Activated CD4-positive, alpha-beta T cell treated with anti-CD3 and anti-CD28 coated beads for 36 hours (primary cell): ENCODE measurements at regions of chr1 and their contacts with region 1.

Region 1: GRCh38 chr1:222654849-222655248 is 37.0 kb downstream of the MIA3 start:
- DNase-seq: peak; percentile 80
- ATAC-seq: peak; percentile 89
- H3K4me3 Mint-ChIP-seq: peak overlapping the region; percentile 20
- H3K27ac Mint-ChIP-seq: peak overlapping the region; percentile 86
- H3K4me1 Mint-ChIP-seq: peaks cover 54% of the 10 kb centered on the region
- H3K27me3 Mint-ChIP-seq: no peaks in the 10 kb centered on the region

Region 2: GRCh38 chr1:222617367-222617951 is 37.4 kb before region 1 on chr1:
- CTCF ChIA-PET with region 1: no interaction called
- POLR2A ChIA-PET with region 1: no interaction called
- intact Hi-C with region 1: loop called in 1 of 2 experiments (anchors 1 kb)
- DNase-seq: peak; percentile 94
- ATAC-seq: peak; percentile 95
- H3K4me3 Mint-ChIP-seq: peak overlapping the region; percentile 83
- H3K27ac Mint-ChIP-seq: peak overlapping the region; percentile 88
- H3K4me1 Mint-ChIP-seq: peaks cover 31% of the 10 kb centered on the region
- H3K27me3 Mint-ChIP-seq: peaks cover 11% of the 10 kb centered on the region

Region 3: DNA sequence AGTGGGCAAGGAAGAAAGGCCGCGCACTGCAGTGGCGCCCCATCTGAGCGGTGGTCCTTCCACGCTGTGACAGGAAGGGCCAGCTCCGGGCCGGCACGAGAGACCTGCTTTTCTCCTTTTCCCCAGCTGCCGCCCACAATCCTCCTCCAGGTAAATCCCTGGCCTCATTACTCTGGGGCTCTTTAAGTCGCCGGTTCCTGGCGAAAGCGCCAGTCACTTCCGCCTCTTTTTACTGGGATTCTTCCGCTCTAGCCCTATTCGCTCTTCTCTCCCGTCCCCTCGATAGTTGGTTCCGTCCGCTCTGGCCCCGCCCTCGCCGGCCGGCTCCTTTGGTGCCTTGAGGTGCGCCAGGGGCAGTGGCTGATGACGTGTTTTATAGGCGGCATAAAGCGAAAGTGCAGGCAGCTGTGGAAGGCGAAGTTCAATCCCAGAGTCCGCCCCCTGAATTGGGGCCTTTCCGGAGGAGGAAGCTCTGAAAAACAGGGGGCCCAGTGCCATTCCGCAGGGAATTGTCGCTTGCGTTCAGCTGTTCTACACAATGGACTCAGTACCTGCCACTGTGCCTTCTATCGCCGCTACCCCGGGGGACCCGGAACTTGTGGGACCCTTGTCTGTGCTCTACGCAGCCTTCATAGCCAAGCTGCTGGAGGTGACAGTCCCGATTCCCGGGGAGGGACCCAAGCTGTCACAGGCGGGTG is 10.8 kb before region 1 on chr1:
- CTCF ChIA-PET with region 1: interaction called, 15 read pairs
- POLR2A ChIA-PET with region 1: no interaction called
- intact Hi-C with region 1: loop called in 1 of 2 experiments (anchors 1 kb)
- DNase-seq: peak; percentile 98
- ATAC-seq: peak; percentile 97
- H3K4me3 Mint-ChIP-seq: peak overlapping the region; percentile 86
- H3K27ac Mint-ChIP-seq: peak overlapping the region; percentile 95
- H3K4me1 Mint-ChIP-seq: peaks cover 26% of the 10 kb centered on the region
- H3K27me3 Mint-ChIP-seq: no peaks in the 10 kb centered on the region

Region 4: DNA sequence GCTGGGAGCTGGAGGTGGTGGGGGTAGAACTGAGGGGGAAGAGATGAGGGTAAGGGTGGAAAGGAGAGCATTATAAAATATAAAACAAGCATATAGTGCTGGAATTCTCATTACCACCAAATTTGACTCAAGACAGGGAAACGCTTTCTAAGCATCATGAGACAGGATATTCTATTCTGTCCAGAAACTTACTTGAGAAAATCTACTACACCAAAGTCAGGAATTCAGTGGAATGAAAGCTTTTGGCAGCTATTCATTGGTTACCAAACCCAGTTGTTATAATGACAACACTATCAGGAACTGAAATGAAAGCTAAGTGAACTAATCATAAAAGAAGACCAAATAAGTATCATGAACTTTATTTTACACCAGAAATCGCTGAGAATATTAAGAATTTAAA is 43.0 kb after region 1 on chr1:
- CTCF ChIA-PET with region 1: interaction called, 3 read pairs
- POLR2A ChIA-PET with region 1: no interaction called
- intact Hi-C with region 1: loop called in 1 of 2 experiments (anchors 5 kb)
- DNase-seq: no peak
- ATAC-seq: no peak
- H3K4me3 Mint-ChIP-seq: no peak overlapping the region
- H3K27ac Mint-ChIP-seq: no peak overlapping the region
- H3K4me1 Mint-ChIP-seq: peaks cover 11% of the 10 kb centered on the region
- H3K27me3 Mint-ChIP-seq: no peaks in the 10 kb centered on the region

Region 5: DNA sequence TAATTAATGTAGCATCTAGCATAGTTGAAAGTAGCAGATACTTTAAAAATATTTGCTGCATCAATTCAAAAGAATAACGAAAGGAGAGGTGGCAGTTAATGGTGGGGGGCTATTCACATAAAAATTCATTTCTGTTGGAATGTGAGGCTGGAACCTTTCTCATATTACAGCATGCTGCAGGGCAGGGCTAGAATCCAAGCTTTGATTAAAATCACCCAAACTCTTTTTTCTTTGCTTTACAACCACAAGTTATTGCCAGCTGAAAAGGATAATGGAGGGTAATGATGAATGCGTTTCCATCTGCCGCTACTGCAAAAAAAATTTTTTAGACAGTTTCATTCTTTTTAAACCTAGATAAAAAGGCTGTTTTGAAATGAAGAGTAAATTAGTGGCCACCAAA is 169.8 kb after region 1 on chr1:
- CTCF ChIA-PET with region 1: no interaction called
- POLR2A ChIA-PET with region 1: no interaction called
- intact Hi-C with region 1: loop called in 1 of 2 experiments (anchors 5 kb)
- DNase-seq: no peak
- ATAC-seq: no peak
- H3K4me3 Mint-ChIP-seq: no peak overlapping the region
- H3K27ac Mint-ChIP-seq: no peak overlapping the region
- H3K4me1 Mint-ChIP-seq: peaks cover 10% of the 10 kb centered on the region
- H3K27me3 Mint-ChIP-seq: no peaks in the 10 kb centered on the region

Region 6: GRCh38 chr1:223081181-223081994 is 426.5 kb after region 1 on chr1:
- CTCF ChIA-PET with region 1: no interaction called
- POLR2A ChIA-PET with region 1: no interaction called
- intact Hi-C with region 1: loop called in 1 of 2 experiments (anchors 5 kb)
- DNase-seq: peak; percentile 89
- ATAC-seq: peak; percentile 99
- H3K4me3 Mint-ChIP-seq: peak overlapping the region; percentile 30
- H3K27ac Mint-ChIP-seq: no peak overlapping the region
- H3K4me1 Mint-ChIP-seq: no peaks in the 10 kb centered on the region
- H3K27me3 Mint-ChIP-seq: no peaks in the 10 kb centered on the region

Region 7: GRCh38 chr1:223831755-223832636 is 1177.1 kb after region 1 on chr1:
- CTCF ChIA-PET with region 1: no interaction called
- POLR2A ChIA-PET with region 1: no interaction called
- intact Hi-C with region 1: loop called in 1 of 2 experiments (anchors 10 kb)
- DNase-seq: no peak
- ATAC-seq: peak; percentile 71
- H3K4me3 Mint-ChIP-seq: no peak overlapping the region
- H3K27ac Mint-ChIP-seq: no peak overlapping the region
- H3K4me1 Mint-ChIP-seq: peaks cover 29% of the 10 kb centered on the region
- H3K27me3 Mint-ChIP-seq: no peaks in the 10 kb centered on the region